CD8-positive, alpha-beta T cell (primary cell): ENCODE measurements at regions of chr20 and their contacts with region 1.

Region 1: DNA sequence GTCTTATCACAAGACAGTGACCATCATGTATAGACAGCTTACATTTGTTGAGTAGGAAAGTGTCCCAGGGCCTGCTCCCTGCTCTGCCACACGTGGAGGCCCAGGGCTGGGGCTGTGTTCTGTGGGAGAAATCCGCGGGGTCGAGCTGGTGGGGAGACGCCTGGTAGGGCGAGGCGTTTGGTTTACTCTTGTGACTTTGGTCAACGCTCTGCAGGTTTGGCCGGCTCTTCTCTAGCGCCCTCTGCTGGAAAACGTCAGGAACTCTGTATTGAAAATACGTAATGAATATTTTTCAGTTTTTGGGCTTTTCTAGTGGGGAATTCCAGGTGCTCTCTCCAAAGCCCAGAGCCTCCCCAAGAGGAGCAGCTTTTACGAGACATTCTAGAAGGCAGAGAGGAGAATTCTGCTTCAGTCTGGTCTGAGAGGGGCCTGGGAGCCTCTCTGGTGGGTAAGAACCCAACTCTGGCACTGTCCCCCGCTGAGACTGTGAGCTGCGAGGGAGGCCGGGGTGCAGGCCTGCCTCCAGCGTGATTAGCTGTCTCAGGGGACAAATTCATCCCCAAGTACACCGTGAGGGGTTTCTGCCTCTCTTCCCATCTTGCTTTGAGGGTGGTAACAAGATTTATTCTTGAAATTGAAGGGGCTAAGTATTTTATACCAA is 112.6 kb upstream of the RALGAPA2 start:
- DNase-seq: peak; percentile 18 to 64 (median 47)
- ATAC-seq: no peak
- H3K4me3 ChIP-seq: no peak overlapping the region
- H3K4me3 Mint-ChIP-seq: no peak overlapping the region
- H3K27ac ChIP-seq: no peak overlapping the region
- H3K27ac Mint-ChIP-seq: no peak overlapping the region
- H3K4me1 ChIP-seq: no peaks in the 10 kb centered on the region
- H3K4me1 Mint-ChIP-seq: peaks cover 2% of the 10 kb centered on the region
- H3K27me3 ChIP-seq: peaks cover 0 to 2% of the 10 kb centered on the region in 2 experiments
- H3K27me3 Mint-ChIP-seq: peaks cover 23% of the 10 kb centered on the region
- CTCF ChIP-seq: peak; percentile 71

Region 2: DNA sequence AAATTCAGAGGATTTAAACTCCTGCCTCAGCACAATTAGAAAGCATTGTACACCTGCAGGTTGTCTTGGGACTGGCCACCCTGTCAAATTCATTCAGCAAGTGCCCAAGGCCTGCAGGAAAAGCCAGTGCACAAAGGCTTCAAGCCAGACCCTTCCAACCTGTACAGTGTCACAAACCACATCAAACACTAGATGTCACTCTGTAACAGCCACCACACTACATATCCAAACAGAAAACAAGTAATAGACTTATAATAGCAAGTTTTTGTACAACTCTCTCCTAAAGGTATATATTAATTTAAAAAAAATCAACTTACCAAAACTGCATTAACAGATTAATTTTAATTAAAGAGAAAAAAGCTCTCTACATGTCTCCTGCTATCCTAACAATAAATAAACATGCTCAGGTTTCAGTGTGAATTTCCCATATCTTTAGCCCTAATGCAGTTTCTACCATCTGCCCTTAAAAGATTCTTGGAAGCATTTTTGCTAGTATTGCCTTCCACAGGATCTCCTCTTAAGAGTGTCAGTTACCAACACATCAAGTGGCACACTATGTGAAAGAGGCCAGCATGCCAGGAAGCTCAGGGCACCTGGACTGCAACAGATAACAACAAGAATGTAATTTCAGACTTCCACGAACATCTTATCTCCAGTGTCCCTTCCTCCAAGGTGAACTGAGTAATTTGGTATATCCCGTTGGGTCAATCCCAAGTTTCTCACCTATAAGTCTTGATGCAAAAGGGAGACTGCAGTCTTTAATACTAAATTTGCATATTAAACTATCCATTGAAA is 160.1 kb before region 1 on chr20:
- CTCF ChIA-PET with region 1: interaction called, 21 read pairs
- POLR2A ChIA-PET with region 1: no interaction called
- intact Hi-C with region 1: loop called in 1 of 2 experiments (anchors 1 kb)
- DNase-seq: peak in 2 of 9 experiments; percentile 34 to 45
- ATAC-seq: no peak
- H3K4me3 ChIP-seq: no peak overlapping the region
- H3K4me3 Mint-ChIP-seq: no peak overlapping the region
- H3K27ac ChIP-seq: no peak overlapping the region
- H3K27ac Mint-ChIP-seq: no peak overlapping the region
- H3K4me1 ChIP-seq: peaks cover 3% of the 10 kb centered on the region
- H3K4me1 Mint-ChIP-seq: peaks cover 37% of the 10 kb centered on the region
- H3K27me3 ChIP-seq: no peaks in the 10 kb centered on the region
- H3K27me3 Mint-ChIP-seq: no peaks in the 10 kb centered on the region
- CTCF ChIP-seq: peak; percentile 35

Region 3: DNA sequence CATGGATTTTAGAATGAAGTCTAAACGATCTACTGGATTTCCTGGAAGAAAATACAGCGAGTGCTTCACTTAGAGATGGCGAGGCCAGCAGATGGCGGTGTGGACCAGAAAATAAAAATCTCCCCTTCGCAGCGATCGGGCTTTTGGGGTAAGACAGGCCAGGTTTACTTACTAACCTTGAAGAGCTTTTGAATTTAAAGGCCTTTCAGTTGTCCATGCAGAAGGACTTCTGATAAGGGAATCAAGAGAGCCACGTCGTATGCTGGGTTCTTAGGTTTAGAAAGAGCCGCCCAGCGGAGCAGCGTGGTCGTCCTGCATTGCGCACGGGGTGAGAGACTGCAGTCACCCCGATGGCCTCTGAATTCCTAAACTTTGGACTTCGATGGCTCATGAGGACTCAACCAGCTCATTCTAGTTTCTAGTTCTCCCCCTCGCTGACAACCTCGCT is 12.5 kb after region 1 on chr20:
- CTCF ChIA-PET with region 1: interaction called, 31 read pairs
- POLR2A ChIA-PET with region 1: no interaction called
- intact Hi-C with region 1: no loop called
- DNase-seq: peak in 4 of 9 experiments; percentile 17 to 28 (median 19)
- ATAC-seq: no peak
- H3K4me3 ChIP-seq: no peak overlapping the region
- H3K4me3 Mint-ChIP-seq: no peak overlapping the region
- H3K27ac ChIP-seq: no peak overlapping the region
- H3K27ac Mint-ChIP-seq: no peak overlapping the region
- H3K4me1 ChIP-seq: no peaks in the 10 kb centered on the region
- H3K4me1 Mint-ChIP-seq: peaks cover 3% of the 10 kb centered on the region
- H3K27me3 ChIP-seq: no peaks in the 10 kb centered on the region
- H3K27me3 Mint-ChIP-seq: peaks cover 16% of the 10 kb centered on the region
- CTCF ChIP-seq: peak; percentile 31